ENCODE measurements at regions of chr9 and their contacts with region 1.

Region 1: DNA sequence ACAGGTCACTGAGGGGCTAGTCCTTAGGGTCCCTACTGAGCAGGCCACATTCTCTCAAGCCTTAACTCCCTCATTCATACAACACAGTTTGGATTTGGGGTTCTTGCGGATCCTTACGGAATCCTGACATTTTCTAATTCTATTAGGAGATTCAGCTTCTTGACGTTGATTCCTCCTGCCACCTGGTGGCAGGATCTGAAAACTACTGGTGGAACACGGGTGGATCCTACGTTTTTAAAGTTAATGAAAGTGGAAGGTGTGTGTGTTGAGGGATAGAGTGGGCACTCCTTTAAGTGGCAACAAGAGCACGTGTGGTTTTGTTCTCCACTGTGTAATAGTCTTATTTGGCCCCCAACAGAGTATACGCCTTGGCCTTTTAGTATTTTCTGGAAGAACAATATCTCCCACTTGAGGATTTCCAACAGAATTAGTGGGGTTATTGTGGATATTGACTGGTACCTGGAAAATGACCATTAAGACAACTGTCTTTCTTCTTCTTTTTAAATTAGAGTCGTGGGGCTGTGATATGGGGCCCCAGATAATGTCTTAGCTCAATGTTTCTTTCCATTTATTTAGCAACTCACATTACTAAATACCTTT is 25.2 kb downstream of the SLC28A3 start:
- DNase-seq: peak; percentile 89
- H3K4me3 Mint-ChIP-seq: no peak overlapping the region
- H3K27ac Mint-ChIP-seq: no peak overlapping the region
- H3K4me1 Mint-ChIP-seq: peaks cover 19% of the 10 kb centered on the region
- H3K27me3 Mint-ChIP-seq: no peaks in the 10 kb centered on the region

Region 2: GRCh38 chr9:83642802-83643201 is 672.6 kb before region 1 on chr9:
- intact Hi-C with region 1: no loop called
- DNase-seq: no peak
- H3K4me3 Mint-ChIP-seq: no peak overlapping the region
- H3K27ac Mint-ChIP-seq: no peak overlapping the region
- H3K4me1 Mint-ChIP-seq: peaks cover 2% of the 10 kb centered on the region
- H3K27me3 Mint-ChIP-seq: no peaks in the 10 kb centered on the region

Region 3: DNA sequence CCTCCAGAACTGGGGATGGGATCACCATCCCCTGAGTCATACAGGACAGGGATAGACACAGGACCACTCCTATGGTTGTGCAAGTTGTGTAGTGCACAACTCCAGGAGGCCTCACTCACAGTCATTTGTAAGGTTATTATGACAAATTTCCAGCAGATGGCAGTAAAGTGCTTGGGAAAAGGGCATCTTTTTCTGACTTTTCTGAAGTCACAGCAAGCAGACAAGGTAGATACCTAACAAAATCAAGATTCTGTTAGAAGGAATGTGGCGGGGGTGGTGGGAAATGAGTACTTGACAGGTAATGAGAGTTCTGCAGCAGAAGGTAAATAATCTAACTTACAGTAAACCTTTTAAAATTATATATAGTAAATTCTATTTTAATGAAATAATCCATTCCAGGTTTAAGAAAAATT is 377.5 kb before region 1 on chr9:
- intact Hi-C with region 1: loop called (anchors 1 kb)
- DNase-seq: peak; percentile 87
- H3K4me3 Mint-ChIP-seq: no peak overlapping the region
- H3K27ac Mint-ChIP-seq: no peak overlapping the region
- H3K4me1 Mint-ChIP-seq: peaks cover 10% of the 10 kb centered on the region
- H3K27me3 Mint-ChIP-seq: no peaks in the 10 kb centered on the region

Region 4: DNA sequence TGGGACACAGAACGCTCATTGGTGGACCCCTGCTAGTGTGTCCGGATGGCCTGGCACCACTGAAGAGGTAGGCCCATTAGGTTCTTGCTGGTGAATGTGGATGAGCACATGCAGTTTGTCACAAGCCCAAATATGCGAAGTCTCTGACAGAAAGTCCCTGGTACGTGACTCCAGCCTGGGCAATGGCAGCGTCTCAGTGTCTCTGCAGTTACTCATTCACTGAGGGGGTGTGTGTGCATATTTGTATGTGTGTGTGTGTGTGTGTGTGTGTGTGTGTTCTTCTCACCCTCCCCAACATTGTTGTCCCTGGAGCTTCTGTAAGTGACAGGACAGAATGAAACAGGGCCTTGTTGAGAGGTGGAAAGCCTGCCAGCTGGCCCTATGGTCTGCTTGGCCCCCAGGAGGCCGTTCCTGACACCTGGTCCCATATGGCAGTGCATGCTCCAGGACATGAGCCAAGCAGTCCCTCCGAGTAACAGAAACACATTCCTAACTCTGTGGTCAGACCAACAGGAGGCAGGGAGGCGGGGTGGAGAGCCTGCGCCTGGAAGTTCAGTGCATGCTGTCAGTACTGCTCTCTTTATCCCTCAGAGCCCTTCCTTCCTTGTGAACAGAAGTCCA is 144.7 kb before region 1 on chr9:
- intact Hi-C with region 1: loop called (anchors 10 kb)
- DNase-seq: no peak
- H3K4me3 Mint-ChIP-seq: no peak overlapping the region
- H3K27ac Mint-ChIP-seq: no peak overlapping the region
- H3K4me1 Mint-ChIP-seq: peaks cover 6% of the 10 kb centered on the region
- H3K27me3 Mint-ChIP-seq: peaks cover 6% of the 10 kb centered on the region

Region 5: DNA sequence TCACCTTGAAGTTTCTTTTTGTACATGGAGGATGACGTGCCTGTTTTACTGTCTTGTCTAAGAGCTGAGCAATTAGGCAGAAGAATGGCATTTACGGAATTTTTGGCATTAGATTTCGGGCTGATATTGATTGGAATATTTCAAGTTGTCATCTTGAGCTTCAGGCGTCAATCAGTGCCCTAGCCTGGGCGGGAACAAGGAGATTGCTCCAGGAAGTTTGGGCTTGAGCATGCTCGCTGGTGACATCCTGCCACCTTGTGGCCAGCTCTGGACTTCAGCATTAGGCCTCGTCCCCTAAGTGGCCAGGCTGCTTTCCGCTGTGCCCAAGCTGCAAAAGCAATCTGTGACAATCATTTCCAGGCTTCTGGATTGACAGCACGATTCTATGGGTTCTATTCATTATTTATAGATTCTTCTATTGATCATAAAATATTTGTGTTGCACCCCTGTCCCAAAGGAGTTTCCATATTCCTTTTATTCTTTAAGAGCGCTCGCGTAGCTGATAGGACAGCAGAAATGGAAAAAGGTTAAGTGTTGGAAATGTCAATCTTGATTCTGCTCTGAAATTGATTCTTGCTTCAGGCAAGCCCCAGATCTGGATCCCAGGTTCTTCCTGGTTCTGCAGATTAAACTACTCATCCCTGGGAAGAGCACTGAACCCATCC is 54.2 kb before region 1 on chr9:
- intact Hi-C with region 1: loop called (anchors 2 kb)
- DNase-seq: peak; percentile 86
- H3K4me3 Mint-ChIP-seq: peak overlapping the region; percentile 44
- H3K27ac Mint-ChIP-seq: no peak overlapping the region
- H3K4me1 Mint-ChIP-seq: peaks cover 9% of the 10 kb centered on the region
- H3K27me3 Mint-ChIP-seq: peaks cover 14% of the 10 kb centered on the region

Region 6: GRCh38 chr9:84271531-84271900 is 43.9 kb before region 1 on chr9:
- intact Hi-C with region 1: loop called (anchors 2 kb)
- DNase-seq: peak; percentile 91
- H3K4me3 Mint-ChIP-seq: peak overlapping the region; percentile 82
- H3K27ac Mint-ChIP-seq: peak overlapping the region; percentile 89
- H3K4me1 Mint-ChIP-seq: peaks cover 25% of the 10 kb centered on the region
- H3K27me3 Mint-ChIP-seq: no peaks in the 10 kb centered on the region

Region 7: GRCh38 chr9:84343111-84343521 is 27.7 kb after region 1 on chr9:
- intact Hi-C with region 1: no loop called
- DNase-seq: no peak
- H3K4me3 Mint-ChIP-seq: no peak overlapping the region
- H3K27ac Mint-ChIP-seq: no peak overlapping the region
- H3K4me1 Mint-ChIP-seq: no peaks in the 10 kb centered on the region
- H3K27me3 Mint-ChIP-seq: peaks cover 15% of the 10 kb centered on the region